HAP-1 (cell line): ENCODE measurements at regions of chr12 and their contacts with region 1.

Region 1: DNA sequence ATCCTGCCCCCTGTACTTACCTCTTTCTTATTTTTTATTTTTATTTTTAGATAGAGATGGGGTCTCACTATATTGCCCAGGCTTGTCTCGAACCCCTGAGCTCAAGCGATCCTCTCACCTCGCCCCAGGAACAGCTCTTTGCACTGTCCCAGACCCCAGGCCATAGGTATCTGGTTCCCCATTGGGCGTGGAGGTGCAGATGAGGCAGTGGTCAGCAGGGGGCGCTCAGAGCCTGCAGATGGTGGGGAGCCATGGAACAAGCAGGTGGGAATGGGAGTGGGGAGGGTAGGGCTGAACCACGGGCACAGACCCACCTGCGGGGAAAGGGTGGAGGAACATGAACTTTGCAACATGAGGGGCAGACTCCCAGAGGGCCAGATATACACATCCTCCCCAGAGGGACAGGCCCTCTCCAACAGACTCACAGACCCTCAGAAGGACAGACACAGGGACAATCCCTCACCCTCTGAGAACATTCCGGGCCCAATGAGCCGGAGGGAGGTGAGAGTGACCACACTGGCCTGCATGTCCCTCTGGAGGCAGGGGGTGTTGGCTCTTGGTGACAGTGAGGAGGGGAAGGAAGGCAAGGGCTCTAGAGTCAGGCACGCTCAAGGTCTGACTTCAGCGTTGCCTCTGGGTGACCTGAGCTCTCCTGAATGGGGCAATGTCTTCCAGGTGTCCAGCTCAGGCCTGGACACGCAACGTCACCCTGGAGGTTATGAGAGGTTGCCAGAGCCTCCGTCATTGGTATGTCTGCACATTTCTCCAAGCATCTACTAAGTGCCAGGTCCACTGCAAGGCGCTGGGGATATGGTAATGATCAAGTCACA is 34.9 kb downstream of the KRT80 start:
- DNase-seq: peak; percentile 50 to 89
- H3K4me3 ChIP-seq: no peak overlapping the region
- H3K4me1 ChIP-seq: no peaks in the 10 kb centered on the region
- H3K27me3 ChIP-seq: no peaks in the 10 kb centered on the region

Region 2: GRCh38 chr12:51970904-51971646 is 185.9 kb before region 1 on chr12:
- in situ Hi-C with region 1: no loop called
- DNase-seq: peak in 1 of 2 experiments; percentile 60
- H3K4me3 ChIP-seq: no peak overlapping the region
- H3K4me1 ChIP-seq: peaks cover 5% of the 10 kb centered on the region; the same call in 1 of the 2 replicates
- H3K27me3 ChIP-seq: no peaks in the 10 kb centered on the region

Region 3: GRCh38 chr12:52327052-52327829 is 170.3 kb after region 1 on chr12:
- in situ Hi-C with region 1: loop called (anchors 10 kb)
- DNase-seq: peak; percentile 31 to 72
- H3K4me3 ChIP-seq: no peak overlapping the region
- H3K4me1 ChIP-seq: no peaks in the 10 kb centered on the region
- H3K27me3 ChIP-seq: peaks cover 34% of the 10 kb centered on the region

Region 4: GRCh38 chr12:52879394-52880351 is 722.7 kb after region 1 on chr12:
- in situ Hi-C with region 1: loop called (anchors 5 kb)
- DNase-seq: peak; percentile 87 to 93
- H3K4me3 ChIP-seq: no peak overlapping the region
- H3K4me1 ChIP-seq: peaks cover 8% of the 10 kb centered on the region
- H3K27me3 ChIP-seq: no peaks in the 10 kb centered on the region

Region 5: GRCh38 chr12:53451661-53452158 is 1294.8 kb after region 1 on chr12 and contains the start of gene PCBP2:
- in situ Hi-C with region 1: no loop called
- DNase-seq: peak; percentile 98 to 99
- H3K4me3 ChIP-seq: peak within 1 kb of the TSS; percentile 96
- H3K4me1 ChIP-seq: peaks cover 16% of the 10 kb centered on the region
- H3K27me3 ChIP-seq: no peaks in the 10 kb centered on the region